Dorsolateral prefrontal cortex (tissue), 120 donors: ENCODE measurements at regions of chr17 and their contacts with region 1.

Region 1: GRCh38 chr17:31294820-31295488 is 2.1 kb downstream of the OMG start:
- DNase-seq: no peak
- H3K4me3 ChIP-seq: peak overlapping the region; percentile 22 to 85 (median 67)
- H3K27ac ChIP-seq: peak overlapping the region; percentile 84 to 98 (median 95)
- H3K27me3 ChIP-seq: no peaks in the 10 kb centered on the region
- CTCF ChIP-seq: no peak

Region 2: GRCh38 chr17:31321481-31321880 is 26.5 kb after region 1 on chr17 and contains the start of gene EVI2A:
- intact Hi-C with region 1: loop called (anchors 2 kb)
- DNase-seq: peak in 7 of 10 donors; percentile 39 to 67 (median 53)
- H3K4me3 ChIP-seq: peak within 1 kb of the TSS; percentile 25 to 78 (median 55)
- H3K27ac ChIP-seq: peak within 1 kb of the TSS; percentile 7 to 98 (median 94)
- H3K27me3 ChIP-seq: no peaks in the 10 kb centered on the region
- CTCF ChIP-seq: peak in 10 of 56 donors; percentile 12 to 34 (median 22)
- total RNA-seq, gene EVI2A: 7.6 to 203 (median 47.5) TPM

Region 3: GRCh38 chr17:31457391-31458234 is 162.7 kb after region 1 on chr17:
- intact Hi-C with region 1: no loop called
- DNase-seq: no peak
- H3K4me3 ChIP-seq: no peak overlapping the region
- H3K27ac ChIP-seq: peak overlapping the region in 2 of 59 donors; percentile 1 to 36
- H3K27me3 ChIP-seq: no peaks in the 10 kb centered on the region
- CTCF ChIP-seq: no peak

Region 4: DNA sequence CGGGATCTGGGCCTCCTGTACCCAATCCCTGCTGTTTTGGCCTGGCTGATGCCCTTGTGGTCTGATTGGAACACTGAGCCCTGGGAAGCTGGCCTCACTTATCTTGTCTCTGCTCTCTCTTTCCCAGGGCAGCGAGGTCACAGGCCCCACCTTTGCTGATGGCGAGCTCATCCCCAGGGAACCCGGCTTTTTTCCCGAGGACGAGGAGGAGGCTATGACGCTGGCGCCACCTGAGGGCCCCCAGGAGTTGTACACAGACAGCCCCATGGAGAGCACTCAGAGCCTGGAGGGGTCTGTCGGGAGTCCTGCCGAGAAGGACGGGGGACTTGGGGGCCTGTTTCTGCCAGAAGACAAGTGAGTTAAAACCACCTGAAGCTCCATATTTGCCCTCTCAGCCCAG is 222.6 kb after region 1 on chr17:
- intact Hi-C with region 1: no loop called
- DNase-seq: no peak
- H3K4me3 ChIP-seq: no peak overlapping the region
- H3K27ac ChIP-seq: peak overlapping the region in 14 of 59 donors; percentile 7 to 62 (median 32)
- H3K27me3 ChIP-seq: no peaks in the 10 kb centered on the region
- CTCF ChIP-seq: peak in 28 of 56 donors; percentile 7 to 53 (median 28)

Region 5: GRCh38 chr17:31549525-31550388 is 254.8 kb after region 1 on chr17:
- intact Hi-C with region 1: no loop called
- DNase-seq: peak; percentile 86 to 96 (median 90)
- H3K4me3 ChIP-seq: peak overlapping the region; percentile 64 to 98 (median 87)
- H3K27ac ChIP-seq: peak overlapping the region; percentile 69 to 98 (median 90)
- H3K27me3 ChIP-seq: no peaks in the 10 kb centered on the region
- CTCF ChIP-seq: peak in 28 of 56 donors; percentile 5 to 49 (median 22)